T-cell (primary cell): ENCODE measurements at regions of chr5 and their contacts with region 1.

Region 1: GRCh38 chr5:56080375-56081052 is 85.8 kb upstream of the IL6ST start:
- DNase-seq: no peak
- ATAC-seq: peak in 3 of 4 experiments; percentile 7 to 75 (median 35)
- H3K4me3 ChIP-seq: no peak overlapping the region
- H3K4me3 Mint-ChIP-seq: peak overlapping the region in 1 of 3 donors; percentile 66
- H3K27ac ChIP-seq: peak overlapping the region; percentile 37
- H3K27ac Mint-ChIP-seq: peak overlapping the region; percentile 88 to 92
- H3K4me1 ChIP-seq: peaks cover 21 to 32% of the 10 kb centered on the region in 2 experiments
- H3K4me1 Mint-ChIP-seq: peaks cover 44 to 62% (median 58%) of the 10 kb centered on the region in 3 donors
- H3K27me3 ChIP-seq: no peaks in the 10 kb centered on the region
- H3K27me3 Mint-ChIP-seq: no peaks in the 10 kb centered on the region

Region 2: GRCh38 chr5:56608217-56608925 is 527.9 kb after region 1 on chr5:
- CTCF ChIA-PET with region 1: no interaction called
- POLR2A ChIA-PET with region 1: interaction called in 1 of 2 experiments, 13 read pairs
- DNase-seq: peak in 1 of 35 experiments; percentile 12
- ATAC-seq: no peak
- H3K4me3 ChIP-seq: no peak overlapping the region
- H3K4me3 Mint-ChIP-seq: no peak overlapping the region
- H3K27ac ChIP-seq: no peak overlapping the region
- H3K27ac Mint-ChIP-seq: no peak overlapping the region
- H3K4me1 ChIP-seq: peaks cover 15 to 27% of the 10 kb centered on the region in 2 experiments
- H3K4me1 Mint-ChIP-seq: peaks cover 58 to 83% (median 78%) of the 10 kb centered on the region in 3 donors
- H3K27me3 ChIP-seq: no peaks in the 10 kb centered on the region
- H3K27me3 Mint-ChIP-seq: no peaks in the 10 kb centered on the region